Right ventricle myocardium inferior (tissue), 1 donor: ENCODE measurements at regions of chr13 and their contacts with region 1.

Region 1: GRCh38 chr13:80551650-80552497 is 210.9 kb upstream of the SPRY2 start:
- DNase-seq: no peak
- ATAC-seq: no peak

Region 2: GRCh38 chr13:80499536-80500290 is 52.2 kb before region 1 on chr13:
- intact Hi-C with region 1: loop called (anchors 5 kb)
- DNase-seq: no peak
- ATAC-seq: no peak

Region 3: DNA sequence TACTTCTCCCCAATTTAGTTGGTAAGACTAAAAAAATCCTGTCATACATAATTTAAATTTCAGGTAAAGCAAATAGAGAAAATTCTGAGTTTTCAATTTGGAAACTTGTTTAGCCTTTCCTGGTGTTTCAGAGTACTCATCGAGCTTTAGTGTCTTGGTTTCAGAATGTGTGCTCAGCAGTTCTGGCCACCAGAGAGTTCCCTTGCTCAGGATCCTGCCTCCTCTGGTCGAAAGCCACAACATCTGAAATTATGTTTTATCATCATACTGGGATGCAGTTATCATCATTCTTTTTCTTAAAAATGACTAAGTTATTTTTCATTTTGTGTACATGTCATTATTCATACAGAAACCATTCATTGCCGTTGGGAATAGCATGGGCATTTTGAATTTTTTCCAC is 52.2 kb after region 1 on chr13:
- intact Hi-C with region 1: loop called (anchors 10 kb)
- DNase-seq: no peak
- ATAC-seq: peak; percentile 85

Region 4: DNA sequence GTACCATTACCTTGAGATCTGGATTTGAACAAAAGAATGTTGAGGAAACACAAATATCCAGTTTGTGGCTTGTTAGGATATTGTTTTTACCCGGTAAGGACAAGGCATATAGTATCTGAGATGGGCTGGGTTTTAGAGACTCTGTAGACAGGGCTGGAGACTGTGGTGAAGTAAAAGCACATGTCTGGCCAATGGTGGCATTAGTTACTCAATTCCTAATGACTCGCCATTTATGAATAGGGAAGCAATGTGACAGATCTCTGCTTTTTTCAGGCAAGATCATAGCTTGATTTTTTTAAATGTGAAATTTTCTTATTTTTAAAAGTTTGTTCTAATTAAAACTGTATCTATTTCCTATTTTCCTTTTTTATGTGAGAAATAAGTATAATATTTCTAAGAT is 160.2 kb after region 1 on chr13:
- intact Hi-C with region 1: no loop called
- DNase-seq: no peak
- ATAC-seq: no peak

Region 5: DNA sequence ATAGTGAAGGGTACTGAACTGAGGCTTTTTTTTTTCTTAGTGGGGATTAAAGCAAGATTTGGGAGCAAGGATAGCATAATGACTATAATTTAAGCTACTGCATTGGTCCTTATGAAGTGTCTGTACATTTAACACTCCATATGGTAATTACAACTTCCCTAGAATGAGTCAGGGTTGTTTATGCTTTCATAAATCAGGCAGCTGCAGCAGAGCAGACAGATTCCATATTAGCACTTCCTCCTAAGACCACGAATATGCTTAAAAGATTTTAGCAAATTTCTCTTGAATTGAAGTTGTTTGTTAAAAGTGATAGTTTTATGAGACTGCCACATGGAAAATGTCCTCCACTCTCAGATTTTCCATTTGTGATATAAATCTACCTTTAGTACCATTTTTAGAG is 190.2 kb after region 1 on chr13:
- intact Hi-C with region 1: no loop called
- DNase-seq: no peak
- ATAC-seq: no peak